ENCODE measurements at regions of chr11 and their contacts with region 1.

Region 1: GRCh38 chr11:75478783-75479596 is 46.0 kb upstream of the KLHL35 start:
- DNase-seq: no peak
- H3K4me3 ChIP-seq: no peak overlapping the region
- H3K27ac ChIP-seq: no peak overlapping the region
- H3K4me1 ChIP-seq: peaks cover 7% of the 10 kb centered on the region
- H3K27me3 ChIP-seq: no peaks in the 10 kb centered on the region
- CTCF ChIP-seq: no peak
- EP300 ChIP-seq: no peak
- POLR2A ChIP-seq: no peak

Region 2: GRCh38 chr11:74870485-74870884 is 608.5 kb before region 1 on chr11:
- intact Hi-C with region 1: no loop called
- DNase-seq: no peak
- H3K4me3 ChIP-seq: no peak overlapping the region
- H3K27ac ChIP-seq: no peak overlapping the region
- H3K4me1 ChIP-seq: no peaks in the 10 kb centered on the region
- H3K27me3 ChIP-seq: no peaks in the 10 kb centered on the region
- CTCF ChIP-seq: no peak
- EP300 ChIP-seq: no peak
- POLR2A ChIP-seq: no peak

Region 3: DNA sequence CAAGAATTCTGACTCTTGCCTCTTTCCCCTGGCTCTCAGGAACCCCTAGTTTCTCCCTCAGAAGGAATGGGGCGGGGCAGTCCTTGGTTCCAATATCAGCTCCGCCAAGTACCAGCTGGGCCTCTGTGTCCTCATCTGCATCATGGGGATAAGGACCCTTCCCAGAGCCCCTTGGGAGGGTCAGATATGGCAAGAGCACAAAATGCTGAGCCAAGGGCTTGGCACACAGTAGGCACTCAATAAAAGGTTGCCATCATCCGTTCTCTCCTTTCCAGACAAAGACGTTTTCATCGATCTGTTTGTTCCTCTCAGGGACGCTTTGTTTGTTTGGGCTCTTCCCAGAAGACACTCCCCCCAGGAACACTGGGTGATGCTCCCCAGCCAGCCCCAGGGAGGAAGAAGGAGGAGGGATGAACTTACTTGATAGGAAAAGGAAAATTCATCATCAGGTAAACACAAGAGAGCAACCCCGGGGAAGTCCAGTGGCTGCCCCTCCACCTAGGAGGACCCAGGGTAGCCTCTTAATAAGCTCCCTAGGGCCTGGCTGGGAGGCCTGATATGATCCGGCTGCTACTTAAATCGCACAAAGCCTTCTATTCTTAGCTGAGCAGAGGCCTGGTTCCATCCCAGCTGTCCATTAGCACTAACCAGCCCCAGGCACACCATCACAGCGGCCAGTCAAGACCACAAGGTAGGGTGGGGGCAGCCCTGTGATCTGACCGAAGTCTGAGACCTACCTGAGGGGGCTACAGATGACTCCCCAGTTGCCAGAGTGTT is 27.1 kb after region 1 on chr11:
- intact Hi-C with region 1: loop called in 1 of 4 experiments (anchors 2 kb)
- DNase-seq: peak in 2 of 5 donors; percentile 59 to 63
- H3K4me3 ChIP-seq: no peak overlapping the region
- H3K27ac ChIP-seq: no peak overlapping the region
- H3K4me1 ChIP-seq: no peaks in the 10 kb centered on the region
- H3K27me3 ChIP-seq: no peaks in the 10 kb centered on the region
- CTCF ChIP-seq: no peak
- EP300 ChIP-seq: no peak
- POLR2A ChIP-seq: no peak

Region 4: GRCh38 chr11:75625991-75626888 is 147.2 kb after region 1 on chr11:
- intact Hi-C with region 1: no loop called
- DNase-seq: no peak
- H3K4me3 ChIP-seq: no peak overlapping the region
- H3K27ac ChIP-seq: no peak overlapping the region
- H3K4me1 ChIP-seq: peaks cover 7% of the 10 kb centered on the region
- H3K27me3 ChIP-seq: no peaks in the 10 kb centered on the region
- CTCF ChIP-seq: no peak
- EP300 ChIP-seq: no peak
- POLR2A ChIP-seq: no peak